Activated naive CD4-positive, alpha-beta T cell treated with anti-CD3 and anti-CD28 coated beads for 36 hours (primary cell): ENCODE measurements at regions of chr6 and their contacts with region 1.

Region 1: DNA sequence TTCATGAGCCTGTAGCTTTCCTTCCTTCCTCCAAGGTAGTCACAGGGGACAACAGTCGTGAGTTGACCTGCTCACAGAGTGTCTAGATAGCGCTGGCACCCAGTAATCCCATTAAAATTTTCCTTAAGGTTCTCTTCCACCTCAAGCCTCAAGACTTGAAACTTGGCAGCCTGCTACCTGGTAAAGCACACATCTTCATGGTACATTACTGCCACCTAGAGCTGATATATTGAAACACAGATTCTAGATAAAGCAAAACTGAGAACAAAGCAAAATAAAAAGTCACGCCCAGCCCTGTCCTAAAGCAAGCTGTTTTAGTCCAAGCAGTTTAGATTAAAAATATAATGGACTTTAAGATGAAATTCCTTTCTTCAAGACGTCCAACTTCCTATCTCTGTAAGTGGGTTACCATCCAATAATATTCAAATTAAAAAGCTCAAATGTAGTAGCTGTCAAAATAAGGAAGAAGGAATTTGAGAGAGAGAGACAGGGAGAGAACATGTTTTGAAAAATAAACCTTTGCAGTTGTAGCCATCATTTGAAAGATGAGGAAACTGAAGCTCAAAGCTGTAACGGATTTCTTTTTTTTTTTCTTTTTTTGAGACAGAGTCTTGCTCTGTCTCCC is 50.7 kb upstream of the CD83 start:
- DNase-seq: peak; percentile 31
- H3K4me3 Mint-ChIP-seq: no peak overlapping the region
- H3K27ac Mint-ChIP-seq: no peak overlapping the region
- H3K4me1 Mint-ChIP-seq: peaks cover 2% of the 10 kb centered on the region
- H3K27me3 Mint-ChIP-seq: peaks cover 5% of the 10 kb centered on the region

Region 2: GRCh38 chr6:13336553-13336952 is 730.3 kb before region 1 on chr6:
- CTCF ChIA-PET with region 1: interaction called, 5 read pairs
- intact Hi-C with region 1: loop called (anchors 1 kb)
- DNase-seq: peak; percentile 82
- H3K4me3 Mint-ChIP-seq: no peak overlapping the region
- H3K27ac Mint-ChIP-seq: no peak overlapping the region
- H3K4me1 Mint-ChIP-seq: peaks cover 8% of the 10 kb centered on the region
- H3K27me3 Mint-ChIP-seq: no peaks in the 10 kb centered on the region

Region 3: DNA sequence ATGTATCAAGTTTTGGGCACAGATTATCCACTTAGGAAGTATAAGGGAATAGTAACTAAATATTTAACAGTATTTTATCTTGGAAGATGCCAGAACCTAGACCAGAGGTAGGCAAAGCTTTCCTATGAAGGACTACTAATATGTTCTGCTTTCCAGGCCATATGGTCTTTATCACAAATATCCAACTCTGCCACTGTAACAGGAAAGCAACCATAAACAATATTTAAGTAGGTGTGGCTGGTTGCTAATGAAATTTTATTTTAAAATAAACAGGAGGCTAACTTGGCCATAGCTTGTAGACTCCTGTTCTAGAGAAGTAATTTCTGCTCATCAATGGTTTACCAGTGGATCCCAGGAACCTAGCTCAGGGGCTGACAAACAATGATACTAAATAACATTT is 412.4 kb before region 1 on chr6:
- CTCF ChIA-PET with region 1: no interaction called
- intact Hi-C with region 1: no loop called
- DNase-seq: no peak
- H3K4me3 Mint-ChIP-seq: no peak overlapping the region
- H3K27ac Mint-ChIP-seq: no peak overlapping the region
- H3K4me1 Mint-ChIP-seq: peaks cover 31% of the 10 kb centered on the region
- H3K27me3 Mint-ChIP-seq: no peaks in the 10 kb centered on the region

Region 4: GRCh38 chr6:13873285-13874190 is 193.4 kb before region 1 on chr6:
- CTCF ChIA-PET with region 1: interaction called, 11 read pairs
- intact Hi-C with region 1: loop called (anchors 1 kb)
- DNase-seq: peak; percentile 77
- H3K4me3 Mint-ChIP-seq: peak overlapping the region; percentile 74
- H3K27ac Mint-ChIP-seq: no peak overlapping the region
- H3K4me1 Mint-ChIP-seq: peaks cover 6% of the 10 kb centered on the region
- H3K27me3 Mint-ChIP-seq: peaks cover 5% of the 10 kb centered on the region

Region 5: GRCh38 chr6:14046476-14047068 is 20.3 kb before region 1 on chr6:
- CTCF ChIA-PET with region 1: interaction called, 48 read pairs
- intact Hi-C with region 1: no loop called
- DNase-seq: peak; percentile 62
- H3K4me3 Mint-ChIP-seq: no peak overlapping the region
- H3K27ac Mint-ChIP-seq: no peak overlapping the region
- H3K4me1 Mint-ChIP-seq: no peaks in the 10 kb centered on the region
- H3K27me3 Mint-ChIP-seq: peaks cover 18% of the 10 kb centered on the region

Region 6: GRCh38 chr6:14082771-14083170 is 15.9 kb after region 1 on chr6:
- CTCF ChIA-PET with region 1: interaction called, 10 read pairs
- intact Hi-C with region 1: no loop called
- DNase-seq: no peak
- H3K4me3 Mint-ChIP-seq: no peak overlapping the region
- H3K27ac Mint-ChIP-seq: no peak overlapping the region
- H3K4me1 Mint-ChIP-seq: peaks cover 21% of the 10 kb centered on the region
- H3K27me3 Mint-ChIP-seq: peaks cover 4% of the 10 kb centered on the region

Region 7: DNA sequence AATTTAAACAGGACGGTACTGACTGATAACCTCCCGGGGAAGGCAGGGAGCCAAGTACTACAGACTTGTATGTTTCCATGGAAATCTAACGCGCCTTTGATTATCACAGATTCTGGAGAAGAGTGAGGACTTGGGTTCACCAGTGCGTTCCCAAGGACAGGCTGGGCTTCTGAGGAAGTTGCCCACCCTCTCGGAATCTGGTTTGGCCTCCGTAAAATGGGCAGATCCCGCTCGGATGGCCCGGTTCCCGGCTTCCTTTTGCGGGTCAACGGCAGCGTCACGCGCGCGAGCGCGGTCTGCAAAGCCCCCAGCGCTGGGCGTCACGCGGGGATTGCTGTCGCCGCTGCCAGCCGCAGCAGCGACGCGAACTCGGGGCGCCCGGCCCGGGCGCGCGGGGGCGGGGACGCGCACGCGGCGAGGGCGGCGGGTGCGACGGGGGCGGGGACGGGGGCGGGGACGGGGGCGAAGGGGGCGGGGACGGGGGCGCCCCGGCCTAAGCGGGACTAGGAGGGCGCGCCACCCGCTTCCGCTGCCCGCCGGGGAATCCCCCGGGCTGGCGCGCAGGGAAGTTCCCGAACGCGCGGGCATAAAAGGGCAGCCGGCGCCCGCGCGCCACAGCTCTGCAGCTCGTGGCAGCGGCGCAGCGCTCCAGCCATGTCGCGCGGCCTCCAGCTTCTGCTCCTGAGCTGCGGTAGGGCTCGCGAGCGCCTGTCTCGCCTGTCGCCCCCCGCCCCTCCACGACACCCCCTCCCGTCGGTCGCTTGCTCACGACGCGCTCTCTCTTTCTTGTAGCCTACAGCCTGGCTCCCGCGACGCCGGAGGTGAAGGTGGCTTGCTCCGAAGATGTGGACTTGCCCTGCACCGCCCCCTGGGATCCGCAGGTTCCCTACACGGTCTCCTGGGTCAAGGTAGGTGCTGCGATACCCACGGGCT is 50.5 kb after region 1 on chr6 and contains the start of gene CD83:
- CTCF ChIA-PET with region 1: interaction called, 11 read pairs
- intact Hi-C with region 1: no loop called
- DNase-seq: peak; percentile 75
- H3K4me3 Mint-ChIP-seq: peak within 1 kb of the TSS; percentile 93
- H3K27ac Mint-ChIP-seq: peak within 1 kb of the TSS; percentile 87
- H3K4me1 Mint-ChIP-seq: peaks cover 36% of the 10 kb centered on the region
- H3K27me3 Mint-ChIP-seq: peaks cover 2% of the 10 kb centered on the region
- total RNA-seq, gene CD83: 11.9 to 13.8 TPM